ENCODE measurements at regions of chr20 and their contacts with region 1.

Region 1: GRCh38 chr20:49657118-49657901 is 56.4 kb downstream of the B4GALT5 start:
- DNase-seq: no peak
- ATAC-seq: peak; percentile 18 to 22
- H3K4me3 ChIP-seq: no peak overlapping the region
- H3K27ac ChIP-seq: peak overlapping the region; percentile 83 to 90 (median 84)
- H3K4me1 ChIP-seq: peaks cover 58 to 85% of the 10 kb centered on the region in 2 donors
- H3K27me3 ChIP-seq: no peaks in the 10 kb centered on the region
- CTCF ChIP-seq: no peak
- POLR2A ChIP-seq: no peak

Region 2: GRCh38 chr20:49668181-49668877 is 11.0 kb after region 1 on chr20:
- in situ Hi-C with region 1: no loop called
- intact Hi-C with region 1: loop called (anchors 1 kb)
- DNase-seq: no peak
- ATAC-seq: peak in 1 of 2 donors; percentile 15
- H3K4me3 ChIP-seq: no peak overlapping the region
- H3K27ac ChIP-seq: peak overlapping the region in 2 of 4 donors; percentile 46 to 58
- H3K4me1 ChIP-seq: peaks cover 50 to 70% of the 10 kb centered on the region in 2 donors
- H3K27me3 ChIP-seq: no peaks in the 10 kb centered on the region
- CTCF ChIP-seq: no peak
- POLR2A ChIP-seq: no peak

Region 3: GRCh38 chr20:49676581-49677291 is 19.4 kb after region 1 on chr20:
- in situ Hi-C with region 1: no loop called
- intact Hi-C with region 1: loop called (anchors 2 kb)
- DNase-seq: peak; percentile 49 to 56
- ATAC-seq: peak; percentile 33 to 62
- H3K4me3 ChIP-seq: peak overlapping the region in 1 of 4 donors; percentile 0
- H3K27ac ChIP-seq: peak overlapping the region; percentile 77 to 91 (median 84)
- H3K4me1 ChIP-seq: peaks cover 96 to 97% of the 10 kb centered on the region in 2 donors
- H3K27me3 ChIP-seq: no peaks in the 10 kb centered on the region
- CTCF ChIP-seq: no peak
- POLR2A ChIP-seq: no peak

Region 4: DNA sequence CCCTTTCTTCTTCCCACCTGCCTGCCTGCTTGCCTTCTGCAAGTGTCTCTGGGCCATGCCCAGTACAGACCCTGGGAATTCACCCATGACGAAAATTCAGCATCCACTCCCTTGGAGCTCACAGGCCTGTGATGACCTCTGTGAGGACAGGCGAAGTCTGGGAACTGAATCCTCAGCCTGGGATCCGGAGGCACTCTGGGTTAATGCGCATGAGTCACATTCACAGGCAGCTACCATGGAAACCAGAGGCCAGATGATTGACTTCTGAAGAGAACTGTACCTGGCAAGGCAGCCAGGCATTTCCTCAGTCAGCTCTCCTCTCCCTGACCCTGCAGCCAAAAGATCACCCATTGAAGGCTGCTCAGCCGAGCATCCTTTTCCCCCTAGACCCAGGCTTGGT is 196.3 kb after region 1 on chr20:
- in situ Hi-C with region 1: no loop called
- intact Hi-C with region 1: no loop called
- DNase-seq: peak in 1 of 2 donors; percentile 47
- ATAC-seq: peak; percentile 39 to 41
- H3K4me3 ChIP-seq: no peak overlapping the region
- H3K27ac ChIP-seq: peak overlapping the region in 2 of 4 donors; percentile 63 to 76
- H3K4me1 ChIP-seq: peaks cover 28 to 41% of the 10 kb centered on the region in 2 donors
- H3K27me3 ChIP-seq: no peaks in the 10 kb centered on the region
- CTCF ChIP-seq: no peak
- POLR2A ChIP-seq: no peak

Measured in gastrocnemius medialis (tissue), 4 donors.